ENCODE measurements at regions of chr3 and their contacts with region 1.

Region 1: GRCh38 chr3:139319428-139320402 is 24.1 kb upstream of the MRPS22 start:
- DNase-seq: no peak
- H3K4me3 ChIP-seq: no peak overlapping the region
- H3K27ac ChIP-seq: no peak overlapping the region
- H3K27me3 ChIP-seq: peaks cover 5% of the 10 kb centered on the region
- CTCF ChIP-seq: peak; percentile 43

Region 2: GRCh38 chr3:139261754-139262586 is 57.7 kb before region 1 on chr3:
- CTCF ChIA-PET with region 1: no interaction called
- POLR2A ChIA-PET with region 1: no interaction called
- DNase-seq: no peak
- H3K4me3 ChIP-seq: no peak overlapping the region
- H3K27ac ChIP-seq: no peak overlapping the region
- H3K27me3 ChIP-seq: peaks cover 19% of the 10 kb centered on the region
- CTCF ChIP-seq: no peak

Region 3: GRCh38 chr3:139302084-139302800 is 17.5 kb before region 1 on chr3:
- CTCF ChIA-PET with region 1: interaction called, 10 read pairs
- POLR2A ChIA-PET with region 1: no interaction called
- DNase-seq: peak; percentile 97
- H3K4me3 ChIP-seq: no peak overlapping the region
- H3K27ac ChIP-seq: peak overlapping the region; percentile 89
- H3K27me3 ChIP-seq: no peaks in the 10 kb centered on the region
- CTCF ChIP-seq: no peak

Measured in AG04450 (cell line).